Aorta (tissue), 5 donors: ENCODE measurements at regions of chr21 and their contacts with region 1.

Region 1: GRCh38 chr21:29175408-29176134 is 45.1 kb downstream of the MAP3K7CL start:
- DNase-seq: no peak
- ATAC-seq: no peak
- H3K4me3 ChIP-seq: no peak overlapping the region
- H3K27ac ChIP-seq: no peak overlapping the region
- H3K4me1 ChIP-seq: peaks cover 0 to 3% of the 10 kb centered on the region in 2 donors
- H3K27me3 ChIP-seq: no peaks in the 10 kb centered on the region

Region 2: DNA sequence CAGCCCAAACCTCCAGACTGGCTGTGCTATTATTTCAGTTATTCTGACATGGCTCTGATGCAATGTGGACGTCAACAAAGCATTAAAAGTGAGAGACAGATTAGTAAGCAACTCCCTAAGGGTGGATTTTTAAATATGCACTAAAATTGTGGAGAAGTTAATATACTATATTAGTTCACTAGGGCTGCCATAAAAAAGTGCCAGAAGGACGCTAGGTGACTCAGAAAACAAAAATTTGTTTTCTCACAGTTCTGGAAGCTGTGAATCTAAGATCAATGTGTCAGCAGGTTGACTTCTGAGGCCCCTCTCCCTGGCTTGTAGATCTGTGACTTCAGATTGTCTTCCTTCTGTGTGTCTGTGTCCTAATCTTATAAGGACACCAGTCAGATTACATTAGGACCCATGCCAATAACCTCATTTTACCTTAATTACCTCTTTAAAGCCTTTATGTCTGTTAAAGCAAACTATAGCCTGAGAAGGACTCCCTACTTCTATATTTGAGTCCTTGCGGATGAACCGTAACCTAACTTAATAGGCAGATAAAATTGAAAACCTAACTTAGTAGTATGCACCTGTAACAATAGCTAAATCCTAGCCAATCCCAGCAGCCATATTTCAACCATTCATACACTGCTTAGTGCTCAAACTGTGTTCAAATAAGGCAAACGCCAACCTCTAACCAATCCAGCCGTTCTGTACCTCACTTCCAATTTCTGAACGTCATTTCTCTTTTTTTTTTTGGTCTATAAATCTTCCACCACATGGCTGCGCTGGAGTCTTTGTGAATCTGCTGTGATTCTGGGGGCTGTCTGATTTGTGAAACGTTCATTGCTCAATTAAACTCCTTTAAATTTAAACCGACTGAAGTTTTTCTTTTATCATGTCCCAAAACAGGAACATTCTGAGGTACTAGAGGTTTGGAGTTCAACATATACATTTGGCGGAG is 57.3 kb after region 1 on chr21:
- intact Hi-C with region 1: loop called (anchors 10 kb)
- DNase-seq: no peak
- ATAC-seq: no peak
- H3K4me3 ChIP-seq: no peak overlapping the region
- H3K27ac ChIP-seq: no peak overlapping the region
- H3K4me1 ChIP-seq: peaks cover 0 to 3% of the 10 kb centered on the region in 2 donors
- H3K27me3 ChIP-seq: no peaks in the 10 kb centered on the region

Region 3: GRCh38 chr21:29365661-29366265 is 190.2 kb after region 1 on chr21:
- intact Hi-C with region 1: loop called in 1 of 2 experiments (anchors 5 kb)
- DNase-seq: no peak
- ATAC-seq: no peak
- H3K4me3 ChIP-seq: no peak overlapping the region
- H3K27ac ChIP-seq: no peak overlapping the region
- H3K4me1 ChIP-seq: no peaks in the 10 kb centered on the region
- H3K27me3 ChIP-seq: no peaks in the 10 kb centered on the region

Region 4: DNA sequence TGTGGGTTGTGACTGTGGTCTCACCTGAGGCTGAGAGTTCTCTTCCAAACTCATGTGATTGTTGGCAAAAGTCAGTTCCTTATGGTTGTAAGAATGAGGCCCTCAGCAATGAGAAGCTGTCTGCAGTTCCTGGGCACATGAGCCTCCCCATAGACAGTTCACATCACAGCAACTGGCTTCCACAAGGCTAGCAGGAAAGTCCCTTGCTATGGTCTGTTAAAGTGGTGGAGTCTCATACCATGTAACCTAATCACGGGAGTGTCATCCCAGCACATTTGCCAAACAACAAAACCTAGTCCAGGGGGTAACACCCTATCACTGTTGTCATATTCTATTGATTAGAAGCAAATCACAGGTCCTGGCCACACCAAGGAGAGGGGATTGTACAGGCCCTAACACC is 286.9 kb after region 1 on chr21:
- intact Hi-C with region 1: no loop called
- DNase-seq: no peak
- ATAC-seq: no peak
- H3K4me3 ChIP-seq: no peak overlapping the region
- H3K27ac ChIP-seq: no peak overlapping the region
- H3K4me1 ChIP-seq: no peaks in the 10 kb centered on the region
- H3K27me3 ChIP-seq: no peaks in the 10 kb centered on the region

Region 5: GRCh38 chr21:29511096-29511495 is 335.5 kb after region 1 on chr21:
- intact Hi-C with region 1: no loop called
- DNase-seq: no peak
- ATAC-seq: no peak
- H3K4me3 ChIP-seq: no peak overlapping the region
- H3K27ac ChIP-seq: no peak overlapping the region
- H3K4me1 ChIP-seq: no peaks in the 10 kb centered on the region
- H3K27me3 ChIP-seq: no peaks in the 10 kb centered on the region